Right ventricle myocardium inferior (tissue), 1 donor: ENCODE measurements at regions of chr20 and their contacts with region 1.

Region 1: DNA sequence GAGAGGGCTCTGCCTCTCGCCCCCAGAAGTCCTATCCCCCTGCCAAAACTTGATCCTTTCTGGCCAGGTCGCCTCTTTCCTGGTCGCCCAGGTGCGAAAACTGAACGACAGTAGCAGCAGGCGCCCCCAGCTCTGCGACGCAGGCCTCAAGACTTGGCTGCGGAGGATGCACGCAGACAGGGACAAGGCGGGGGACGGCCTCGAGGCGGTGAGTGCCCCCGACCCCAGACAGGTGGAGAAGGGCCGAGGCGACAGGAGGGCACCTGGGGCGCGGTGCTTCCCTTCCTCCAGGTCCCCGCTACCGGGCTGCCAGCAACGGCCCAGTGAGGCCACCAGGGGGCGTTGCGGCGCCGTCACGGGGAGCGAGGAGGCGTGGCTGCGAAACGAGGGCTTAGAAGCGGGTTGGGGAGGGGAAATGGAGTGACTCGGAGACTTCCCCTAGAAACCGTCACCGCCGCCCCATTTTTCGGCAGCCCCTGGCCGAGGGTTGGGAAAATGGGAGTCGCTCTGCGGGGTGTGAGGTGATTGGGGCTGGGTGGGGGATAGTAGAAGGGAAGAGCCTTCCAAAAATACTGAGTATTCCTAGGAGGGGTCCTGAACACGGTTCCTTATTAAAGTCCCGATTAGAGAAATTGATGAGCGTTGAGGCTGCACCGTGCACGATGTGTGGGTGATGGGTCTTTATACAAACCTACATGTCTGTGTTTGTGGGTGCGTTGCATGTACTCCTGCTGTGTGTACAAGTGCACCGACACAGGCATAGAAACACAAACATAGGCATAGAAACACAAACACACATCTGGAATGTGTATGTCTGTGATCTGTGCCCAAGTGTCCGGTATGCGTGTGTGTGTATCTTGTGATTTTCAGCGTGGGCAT is 44.6 kb downstream of the ARHGAP40 start:
- DNase-seq: peak; percentile 87
- ATAC-seq: peak; percentile 83

Region 2: GRCh38 chr20:38604861-38605303 is 41.3 kb before region 1 on chr20:
- intact Hi-C with region 1: no loop called
- DNase-seq: no peak
- ATAC-seq: no peak

Region 3: DNA sequence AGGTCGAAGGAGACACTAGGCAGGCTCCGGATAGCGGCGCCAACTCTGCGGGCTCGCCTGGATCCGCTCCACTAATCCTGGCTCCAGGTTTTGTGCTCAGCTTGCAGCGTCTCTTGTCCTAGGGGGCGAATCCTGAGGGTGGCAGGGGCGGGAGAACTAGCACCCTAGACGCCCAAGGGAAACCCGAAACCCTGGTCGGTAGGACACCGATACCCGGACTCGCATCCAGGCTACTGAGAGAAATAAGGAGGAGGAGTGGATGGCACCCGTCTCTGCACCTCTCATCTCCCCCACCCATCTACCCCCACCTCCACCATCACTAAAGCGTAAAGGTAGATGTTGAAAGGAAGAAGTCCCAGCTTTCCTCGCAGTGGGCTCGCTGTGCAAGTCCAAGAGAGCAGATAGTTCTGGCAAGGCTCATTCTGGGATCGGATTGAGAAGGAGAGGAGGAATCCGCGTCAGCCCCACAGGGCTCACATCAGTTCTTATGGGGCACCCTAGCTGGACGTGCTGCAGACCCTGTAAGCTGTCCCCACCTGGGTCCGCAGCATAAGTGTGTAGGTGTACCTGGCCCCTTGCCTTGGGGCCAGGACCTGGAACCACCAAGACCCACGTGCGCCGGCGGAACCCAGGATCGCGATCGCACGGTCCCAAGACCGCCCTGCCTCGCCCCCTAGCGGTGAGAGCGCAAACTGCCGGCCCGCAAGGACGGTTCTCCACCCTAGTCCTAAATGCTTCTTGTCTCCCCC is 84.9 kb after region 1 on chr20:
- intact Hi-C with region 1: loop called (anchors 2 kb)
- DNase-seq: peak; percentile 86
- ATAC-seq: peak; percentile 74

Region 4: GRCh38 chr20:38751360-38751976 is 105.2 kb after region 1 on chr20:
- intact Hi-C with region 1: loop called (anchors 1 kb)
- DNase-seq: no peak
- ATAC-seq: no peak

Region 5: DNA sequence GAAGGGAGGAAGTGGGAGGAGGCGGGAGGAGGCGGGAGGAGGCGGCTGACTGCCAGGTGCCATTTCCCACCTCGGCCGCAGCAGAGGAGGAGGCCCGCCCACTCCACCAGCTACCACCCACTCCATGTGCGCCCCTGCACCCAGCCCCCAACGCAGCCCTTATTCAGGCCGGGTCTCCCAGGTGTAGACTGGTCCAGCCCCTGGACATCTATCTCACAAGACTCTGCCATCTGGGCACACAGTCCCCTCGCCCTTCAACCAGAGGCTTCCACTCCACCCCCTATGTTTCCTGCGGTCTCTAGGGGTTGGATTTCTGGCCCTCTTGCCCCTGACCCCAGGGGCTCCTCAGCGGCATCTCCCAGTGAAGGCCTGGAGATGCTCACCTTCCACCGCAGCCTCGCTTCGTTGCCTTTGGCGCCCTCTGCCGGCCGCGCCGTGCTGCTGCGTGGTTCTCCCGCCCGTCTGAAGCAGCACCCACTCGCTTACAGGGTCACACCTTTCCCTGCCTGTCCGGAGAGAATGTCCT is 247.4 kb after region 1 on chr20:
- intact Hi-C with region 1: loop called (anchors 5 kb)
- DNase-seq: peak; percentile 87
- ATAC-seq: peak; percentile 79

Region 6: DNA sequence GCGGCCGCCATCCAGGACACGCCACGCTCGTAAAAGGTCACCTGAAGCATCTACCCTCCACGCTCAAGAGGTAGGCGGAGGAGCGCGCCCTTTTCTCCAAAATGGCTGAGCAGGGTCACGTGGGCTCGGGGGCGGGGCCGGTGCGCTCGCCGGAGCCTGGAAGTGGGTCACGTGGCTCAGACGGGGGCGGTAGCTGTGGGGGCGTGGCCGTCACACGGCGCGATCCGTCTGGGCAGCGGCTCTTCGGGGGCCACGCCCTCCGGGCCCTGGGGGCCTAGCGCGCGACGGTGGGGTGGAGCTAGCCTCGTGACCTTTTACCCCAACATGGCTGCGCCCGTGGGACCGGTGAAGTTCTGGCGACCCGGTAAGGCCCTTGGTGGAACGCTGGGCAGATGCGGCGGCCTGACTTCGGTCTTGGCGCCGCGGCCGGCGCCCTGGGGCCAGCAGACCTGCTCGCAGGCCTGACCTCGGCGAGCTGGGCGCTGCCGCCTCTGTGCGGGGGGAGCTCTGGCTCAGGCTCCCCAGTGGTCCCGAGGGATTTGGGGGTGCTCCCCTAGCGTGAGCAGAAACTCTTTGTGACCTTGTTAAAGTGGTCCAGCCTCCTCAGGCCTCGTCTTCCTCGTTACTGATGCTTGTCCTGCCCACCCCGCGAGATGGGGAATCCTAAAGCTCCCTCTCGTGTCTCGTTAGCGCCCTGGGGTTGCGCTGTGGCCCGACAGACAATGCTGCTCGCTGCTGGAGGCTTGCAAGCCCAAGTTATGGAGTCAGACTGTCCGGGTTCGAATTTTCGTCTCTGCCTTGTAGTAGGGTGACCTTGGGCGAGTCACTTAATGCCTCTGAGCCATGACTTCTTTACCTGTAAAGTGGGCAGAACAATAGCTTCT is 316.1 kb after region 1 on chr20 and contains the start of gene DHX35:
- intact Hi-C with region 1: loop called (anchors 5 kb)
- DNase-seq: peak; percentile 99
- ATAC-seq: peak; percentile 100
- total RNA-seq, gene DHX35: 11.0 TPM